AG04450 (cell line): ENCODE measurements at regions of chr2 and their contacts with region 1.

Region 1: DNA sequence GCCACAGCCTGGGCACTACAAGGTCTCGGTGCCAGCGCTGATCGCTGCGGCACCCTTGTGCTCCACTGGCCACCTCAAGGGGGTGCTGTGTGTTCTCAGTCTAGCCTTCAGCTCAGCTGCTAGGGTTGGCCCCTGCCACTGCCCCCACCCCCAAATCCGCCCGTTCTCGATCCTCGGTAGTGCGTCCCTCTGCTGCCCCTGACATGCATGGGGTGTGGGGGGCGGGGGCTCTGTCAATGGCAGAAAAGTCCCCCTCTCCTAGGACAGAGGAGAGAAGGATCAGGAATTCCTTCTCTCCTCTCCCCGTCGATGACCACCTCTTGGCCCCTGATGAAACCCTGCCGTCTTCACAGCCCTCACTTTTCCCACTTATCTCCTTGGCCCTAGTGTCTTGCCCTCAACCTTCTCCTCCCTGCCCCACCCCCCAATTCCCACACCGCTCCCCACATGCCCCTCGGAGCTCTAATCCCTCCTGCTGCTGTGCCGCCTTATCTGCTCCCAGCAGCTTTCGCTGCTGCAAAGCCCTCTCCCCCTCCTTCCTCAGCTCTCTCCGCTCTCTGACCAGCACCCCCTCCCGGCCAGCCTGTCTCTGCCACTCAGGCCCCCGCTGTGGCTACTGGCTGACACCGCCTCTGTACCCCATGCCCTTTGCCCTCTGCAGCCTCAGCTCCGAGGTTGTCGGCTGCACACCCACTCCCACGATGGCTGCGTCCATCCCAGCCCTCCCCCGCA is 4.3 kb upstream of the ASIC4 start:
- DNase-seq: no peak
- H3K4me3 ChIP-seq: peak overlapping the region; percentile 37
- H3K27ac ChIP-seq: no peak overlapping the region
- H3K27me3 ChIP-seq: peaks cover 46% of the 10 kb centered on the region
- CTCF ChIP-seq: peak; percentile 79

Region 2: DNA sequence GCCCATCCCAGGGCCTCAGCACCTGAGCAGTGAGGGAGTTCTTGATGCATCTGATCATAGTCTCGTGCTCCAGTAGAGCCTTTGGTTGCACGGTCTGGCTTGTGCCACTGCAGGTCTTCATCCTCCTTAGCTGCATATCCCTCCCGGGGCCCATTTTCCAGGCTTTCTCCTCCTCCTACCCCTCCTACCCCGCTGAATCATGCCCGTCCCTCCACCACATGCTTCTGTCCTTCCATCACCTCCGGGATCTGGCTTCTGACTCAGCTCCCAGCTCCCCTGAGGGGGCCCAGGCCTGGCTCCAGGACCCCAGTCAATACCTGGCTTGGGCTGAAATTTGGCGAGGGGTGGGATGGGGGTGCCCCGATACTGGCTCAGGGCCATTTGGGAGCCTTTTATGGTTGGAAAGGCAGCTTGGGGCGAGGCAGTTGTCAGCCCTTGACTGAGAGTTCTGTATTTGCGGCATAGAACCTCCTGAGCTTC is 57.1 kb before region 1 on chr2:
- CTCF ChIA-PET with region 1: interaction called, 11 read pairs
- POLR2A ChIA-PET with region 1: no interaction called
- DNase-seq: peak; percentile 85
- H3K4me3 ChIP-seq: no peak overlapping the region
- H3K27ac ChIP-seq: peak overlapping the region; percentile 99
- H3K27me3 ChIP-seq: no peaks in the 10 kb centered on the region
- CTCF ChIP-seq: no peak

Region 3: GRCh38 chr2:219466816-219467748 is 42.9 kb before region 1 on chr2:
- CTCF ChIA-PET with region 1: interaction called, 10 read pairs
- POLR2A ChIA-PET with region 1: no interaction called
- DNase-seq: no peak
- H3K4me3 ChIP-seq: no peak overlapping the region
- H3K27ac ChIP-seq: peak overlapping the region; percentile 21
- H3K27me3 ChIP-seq: no peaks in the 10 kb centered on the region
- CTCF ChIP-seq: no peak

Region 4: DNA sequence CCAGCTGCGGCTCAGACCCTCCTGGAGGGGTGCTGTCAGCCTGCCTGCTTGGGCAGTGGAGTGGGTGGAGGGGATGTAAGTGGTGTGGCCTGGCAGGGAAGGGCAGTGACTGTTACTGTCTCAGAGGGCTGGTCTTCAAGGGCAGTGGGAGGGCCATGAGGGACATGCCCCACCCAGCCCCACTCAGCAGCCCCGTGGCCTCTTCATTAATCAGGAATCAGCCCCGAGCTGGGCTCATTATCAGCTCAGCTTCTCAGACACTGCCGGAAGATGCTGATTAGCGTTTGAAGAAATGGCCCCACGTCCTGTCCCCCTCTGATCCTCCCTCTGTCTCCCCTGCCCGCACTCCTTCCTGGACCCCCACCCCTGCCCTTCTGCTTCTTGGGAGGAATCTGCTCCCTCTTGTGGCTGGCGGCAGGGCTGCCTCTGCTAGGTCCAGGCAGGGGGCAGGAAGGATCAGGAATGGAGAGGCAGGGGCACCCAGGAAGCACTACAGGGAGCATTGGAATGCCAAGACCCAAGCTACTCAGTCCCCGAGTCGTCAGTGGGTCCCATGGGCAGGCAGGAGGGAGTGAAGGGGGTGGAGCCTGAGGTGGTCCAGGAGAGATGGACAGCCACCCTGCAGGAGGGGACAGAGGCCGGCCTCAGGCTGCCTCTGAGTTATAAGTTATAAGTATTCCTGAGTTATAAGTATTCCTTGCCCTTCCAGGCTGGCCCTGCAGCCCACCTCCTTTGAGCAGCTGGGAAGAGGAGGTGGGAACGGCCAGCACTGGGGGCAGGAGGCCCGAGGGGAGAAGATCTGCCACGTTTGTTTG is 11.3 kb after region 1 on chr2:
- CTCF ChIA-PET with region 1: interaction called, 97 read pairs
- POLR2A ChIA-PET with region 1: interaction called, 4 read pairs
- DNase-seq: no peak
- H3K4me3 ChIP-seq: no peak overlapping the region
- H3K27ac ChIP-seq: no peak overlapping the region
- H3K27me3 ChIP-seq: peaks cover 19% of the 10 kb centered on the region
- CTCF ChIP-seq: peak; percentile 87

Region 5: DNA sequence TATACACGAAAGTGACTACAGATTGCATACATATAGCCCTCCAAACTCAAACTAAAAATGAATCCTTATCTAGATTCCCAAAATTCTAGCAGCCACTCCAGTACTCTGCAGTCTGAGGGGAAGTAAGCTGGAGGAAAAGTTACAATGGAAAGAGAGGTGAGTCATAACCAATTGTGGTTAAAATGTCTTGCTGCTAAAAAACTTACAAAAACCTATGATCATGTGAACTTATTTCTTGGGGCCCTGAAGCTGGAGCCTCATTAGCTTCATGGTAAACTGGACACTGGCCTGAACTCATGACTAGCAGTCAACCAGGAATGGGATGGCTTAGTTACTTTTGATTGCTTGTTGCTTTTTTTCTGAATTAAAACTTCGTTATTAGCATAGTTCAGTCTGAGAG is 293.3 kb after region 1 on chr2:
- CTCF ChIA-PET with region 1: no interaction called
- POLR2A ChIA-PET with region 1: no interaction called
- DNase-seq: no peak
- H3K4me3 ChIP-seq: no peak overlapping the region
- H3K27ac ChIP-seq: no peak overlapping the region
- H3K27me3 ChIP-seq: peaks cover 2% of the 10 kb centered on the region
- CTCF ChIP-seq: no peak